ENCODE measurements at regions of chr15 and their contacts with region 1.

Region 1: GRCh38 chr15:93020976-93021772 is 67.8 kb downstream of the RGMA start:
- DNase-seq: no peak
- ATAC-seq: no peak
- H3K4me3 Mint-ChIP-seq: no peak overlapping the region
- H3K27ac Mint-ChIP-seq: no peak overlapping the region
- H3K4me1 Mint-ChIP-seq: peaks cover 35% of the 10 kb centered on the region
- H3K27me3 Mint-ChIP-seq: no peaks in the 10 kb centered on the region
- CTCF ChIP-seq: no peak

Region 2: DNA sequence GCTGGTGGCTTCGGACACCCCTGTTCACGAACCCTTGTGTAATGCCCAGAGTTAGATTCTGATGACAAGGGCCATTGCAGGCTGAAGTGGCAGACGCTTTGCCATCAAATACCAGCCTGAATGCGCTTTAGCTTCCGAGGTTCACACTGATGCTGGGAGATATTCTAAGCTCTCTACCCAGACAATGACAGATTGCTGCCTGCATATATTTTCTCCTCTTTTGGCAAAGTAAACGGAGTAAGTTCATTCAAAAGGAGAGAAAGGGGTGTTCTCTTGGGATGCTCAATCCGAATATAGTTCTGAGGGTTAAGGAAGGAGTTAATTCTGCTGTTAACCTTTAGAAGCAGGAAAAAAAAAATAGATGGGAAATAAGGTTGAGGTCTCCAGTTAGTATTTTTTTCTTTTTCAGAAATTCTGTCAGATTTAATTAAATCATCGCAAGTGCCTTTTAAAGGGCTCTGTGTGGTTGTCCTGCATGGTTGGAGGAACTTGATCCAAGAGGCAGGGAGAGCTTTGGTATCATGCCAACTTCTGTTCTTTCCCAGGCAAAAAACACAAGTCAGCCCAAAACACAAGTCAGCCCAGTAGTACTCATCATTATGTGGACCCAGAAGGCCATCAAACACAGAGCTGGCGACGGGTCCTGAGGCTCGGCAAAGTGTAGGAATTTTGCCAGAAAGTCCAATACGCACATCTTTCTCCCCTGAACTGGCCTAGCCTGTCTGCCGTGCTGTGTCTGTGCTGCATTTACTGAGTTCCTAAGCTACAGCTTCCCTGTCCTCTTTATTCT is 698.4 kb before region 1 on chr15:
- CTCF ChIA-PET with region 1: no interaction called
- POLR2A ChIA-PET with region 1: no interaction called
- intact Hi-C with region 1: no loop called
- DNase-seq: no peak
- ATAC-seq: no peak
- H3K4me3 Mint-ChIP-seq: no peak overlapping the region
- H3K27ac Mint-ChIP-seq: no peak overlapping the region
- H3K4me1 Mint-ChIP-seq: no peaks in the 10 kb centered on the region
- H3K27me3 Mint-ChIP-seq: no peaks in the 10 kb centered on the region
- CTCF ChIP-seq: no peak

Region 3: GRCh38 chr15:93035953-93036800 is 15.0 kb after region 1 on chr15:
- CTCF ChIA-PET with region 1: interaction called, 3 read pairs
- POLR2A ChIA-PET with region 1: no interaction called
- intact Hi-C with region 1: loop called (anchors 2 kb)
- DNase-seq: no peak
- ATAC-seq: peak; percentile 80
- H3K4me3 Mint-ChIP-seq: peak overlapping the region; percentile 60
- H3K27ac Mint-ChIP-seq: no peak overlapping the region
- H3K4me1 Mint-ChIP-seq: peaks cover 2% of the 10 kb centered on the region
- H3K27me3 Mint-ChIP-seq: peaks cover 3% of the 10 kb centered on the region
- CTCF ChIP-seq: no peak

Measured in activated B cell treated with CpG ODN at 0.5 μM for 24 hours (primary cell).